ENCODE measurements at regions of chr1 and their contacts with region 1.

Region 1: GRCh38 chr1:207963427-207964194 is 52.7 kb upstream of the CD34 start:
- DNase-seq: peak; percentile 86
- ATAC-seq: peak; percentile 84
- H3K4me3 Mint-ChIP-seq: peak overlapping the region; percentile 74
- H3K27ac Mint-ChIP-seq: peak overlapping the region; percentile 81
- H3K4me1 Mint-ChIP-seq: peaks cover 8% of the 10 kb centered on the region
- H3K27me3 Mint-ChIP-seq: peaks cover 39% of the 10 kb centered on the region

Region 2: GRCh38 chr1:207762622-207763021 is 201.0 kb before region 1 on chr1:
- CTCF ChIA-PET with region 1: no interaction called
- DNase-seq: no peak
- ATAC-seq: no peak
- H3K4me3 Mint-ChIP-seq: no peak overlapping the region
- H3K27ac Mint-ChIP-seq: no peak overlapping the region
- H3K4me1 Mint-ChIP-seq: peaks cover 6% of the 10 kb centered on the region
- H3K27me3 Mint-ChIP-seq: no peaks in the 10 kb centered on the region

Region 3: DNA sequence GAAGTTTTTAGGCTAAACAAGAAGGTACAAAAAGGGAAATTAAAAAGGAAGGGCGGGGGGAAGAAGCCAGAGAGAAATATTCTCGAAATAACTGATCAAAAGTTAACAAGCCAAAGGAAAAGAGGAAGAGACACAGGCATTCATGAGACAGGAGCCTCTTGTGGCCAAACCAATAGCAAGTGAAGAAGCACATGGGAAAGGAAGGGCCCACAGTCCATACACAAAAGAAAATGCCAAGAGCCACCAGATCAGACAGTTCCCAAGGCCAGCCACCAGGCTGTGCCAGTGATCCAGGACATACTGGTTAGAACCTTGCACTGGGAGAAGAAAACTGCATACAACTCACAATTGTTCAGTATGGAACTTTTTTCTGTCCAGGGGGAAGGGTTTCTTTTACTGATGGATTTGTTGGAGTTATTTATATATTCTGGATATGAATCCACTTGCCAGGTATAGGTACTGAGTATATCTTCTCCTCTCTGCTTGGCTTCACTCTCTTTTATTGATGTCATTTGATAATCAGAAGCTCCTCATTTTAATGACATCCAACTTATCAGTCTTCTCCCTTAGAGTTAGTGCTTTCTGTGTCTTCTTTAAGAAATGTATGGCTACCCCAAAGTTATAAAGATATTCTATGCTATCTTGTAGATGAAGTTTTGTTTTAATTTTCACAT is 135.0 kb before region 1 on chr1:
- CTCF ChIA-PET with region 1: interaction called, 30 read pairs
- DNase-seq: peak; percentile 74
- ATAC-seq: peak; percentile 20
- H3K4me3 Mint-ChIP-seq: no peak overlapping the region
- H3K27ac Mint-ChIP-seq: peak overlapping the region; percentile 65
- H3K4me1 Mint-ChIP-seq: peaks cover 95% of the 10 kb centered on the region
- H3K27me3 Mint-ChIP-seq: no peaks in the 10 kb centered on the region

Region 4: DNA sequence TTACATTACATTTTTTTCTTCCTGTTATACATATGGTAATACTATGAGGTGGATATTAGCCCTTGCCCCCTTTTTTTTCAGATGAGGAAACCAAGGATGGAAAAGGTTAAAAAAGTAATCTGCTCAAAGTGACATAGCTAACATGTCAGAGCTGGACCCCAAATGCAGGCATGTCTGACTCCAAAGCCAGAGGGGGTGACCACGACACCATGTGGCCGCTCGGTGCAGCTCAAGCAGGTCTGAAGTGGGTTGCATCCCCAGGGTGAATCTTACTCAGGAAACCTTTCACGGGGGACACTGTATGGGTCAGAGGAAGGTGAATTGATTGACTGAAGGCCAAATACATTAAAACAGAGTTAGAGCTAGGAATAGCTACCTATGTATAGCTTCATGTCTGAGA is 87.5 kb before region 1 on chr1:
- CTCF ChIA-PET with region 1: interaction called, 37 read pairs
- DNase-seq: peak; percentile 55
- ATAC-seq: peak; percentile 34
- H3K4me3 Mint-ChIP-seq: no peak overlapping the region
- H3K27ac Mint-ChIP-seq: no peak overlapping the region
- H3K4me1 Mint-ChIP-seq: peaks cover 58% of the 10 kb centered on the region
- H3K27me3 Mint-ChIP-seq: no peaks in the 10 kb centered on the region

Region 5: DNA sequence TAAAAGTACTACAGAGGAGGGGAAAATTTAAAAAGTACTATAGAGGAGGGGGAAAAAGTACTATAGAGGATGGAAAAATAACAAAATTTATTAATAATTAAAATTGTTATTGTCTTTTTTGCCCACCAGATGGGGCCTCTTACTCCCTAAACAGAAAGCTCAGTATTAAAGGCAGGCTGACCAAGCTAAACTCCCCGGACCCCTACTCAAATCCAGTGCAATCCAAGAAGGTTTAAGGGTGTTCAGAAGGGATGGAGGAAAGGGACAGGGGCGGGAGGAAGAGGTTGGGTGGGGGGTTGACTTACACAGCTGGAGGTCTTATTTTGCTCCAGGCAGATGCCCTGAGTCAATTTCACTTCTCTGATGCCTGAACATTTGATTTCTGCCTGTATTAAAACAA is 66.4 kb before region 1 on chr1:
- CTCF ChIA-PET with region 1: interaction called, 47 read pairs
- DNase-seq: no peak
- ATAC-seq: no peak
- H3K4me3 Mint-ChIP-seq: no peak overlapping the region
- H3K27ac Mint-ChIP-seq: no peak overlapping the region
- H3K4me1 Mint-ChIP-seq: peaks cover 15% of the 10 kb centered on the region
- H3K27me3 Mint-ChIP-seq: peaks cover 5% of the 10 kb centered on the region

Region 6: GRCh38 chr1:207946756-207947155 is 16.9 kb before region 1 on chr1:
- CTCF ChIA-PET with region 1: interaction called, 32 read pairs
- DNase-seq: no peak
- ATAC-seq: no peak
- H3K4me3 Mint-ChIP-seq: no peak overlapping the region
- H3K27ac Mint-ChIP-seq: no peak overlapping the region
- H3K4me1 Mint-ChIP-seq: no peaks in the 10 kb centered on the region
- H3K27me3 Mint-ChIP-seq: peaks cover 26% of the 10 kb centered on the region

Region 7: GRCh38 chr1:208047476-208047934 is 83.9 kb after region 1 on chr1:
- CTCF ChIA-PET with region 1: no interaction called
- DNase-seq: no peak
- ATAC-seq: no peak
- H3K4me3 Mint-ChIP-seq: no peak overlapping the region
- H3K27ac Mint-ChIP-seq: no peak overlapping the region
- H3K4me1 Mint-ChIP-seq: peaks cover 11% of the 10 kb centered on the region
- H3K27me3 Mint-ChIP-seq: peaks cover 3% of the 10 kb centered on the region

Region 8: DNA sequence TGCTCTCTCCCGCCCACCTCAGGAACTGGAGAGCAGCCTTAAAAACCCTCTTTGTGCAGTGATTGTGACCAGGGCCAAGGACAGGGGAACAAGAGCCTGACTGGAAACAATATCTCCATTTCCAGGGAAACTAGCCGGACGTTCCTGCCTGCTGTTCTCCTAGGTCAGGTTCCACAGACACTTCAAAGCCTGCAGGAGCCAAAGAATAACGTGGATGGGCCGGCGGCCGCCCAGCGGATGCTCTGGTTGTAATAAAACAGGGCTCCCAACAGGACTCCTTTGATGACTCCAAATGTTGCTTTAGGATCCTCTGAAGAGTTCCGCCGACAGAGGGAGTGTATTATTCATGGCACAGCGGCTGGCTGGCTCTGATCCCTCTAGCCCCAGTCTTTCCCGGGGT is 118.4 kb after region 1 on chr1:
- CTCF ChIA-PET with region 1: no interaction called
- DNase-seq: no peak
- ATAC-seq: no peak
- H3K4me3 Mint-ChIP-seq: no peak overlapping the region
- H3K27ac Mint-ChIP-seq: no peak overlapping the region
- H3K4me1 Mint-ChIP-seq: peaks cover 13% of the 10 kb centered on the region
- H3K27me3 Mint-ChIP-seq: peaks cover 6% of the 10 kb centered on the region

Region 9: DNA sequence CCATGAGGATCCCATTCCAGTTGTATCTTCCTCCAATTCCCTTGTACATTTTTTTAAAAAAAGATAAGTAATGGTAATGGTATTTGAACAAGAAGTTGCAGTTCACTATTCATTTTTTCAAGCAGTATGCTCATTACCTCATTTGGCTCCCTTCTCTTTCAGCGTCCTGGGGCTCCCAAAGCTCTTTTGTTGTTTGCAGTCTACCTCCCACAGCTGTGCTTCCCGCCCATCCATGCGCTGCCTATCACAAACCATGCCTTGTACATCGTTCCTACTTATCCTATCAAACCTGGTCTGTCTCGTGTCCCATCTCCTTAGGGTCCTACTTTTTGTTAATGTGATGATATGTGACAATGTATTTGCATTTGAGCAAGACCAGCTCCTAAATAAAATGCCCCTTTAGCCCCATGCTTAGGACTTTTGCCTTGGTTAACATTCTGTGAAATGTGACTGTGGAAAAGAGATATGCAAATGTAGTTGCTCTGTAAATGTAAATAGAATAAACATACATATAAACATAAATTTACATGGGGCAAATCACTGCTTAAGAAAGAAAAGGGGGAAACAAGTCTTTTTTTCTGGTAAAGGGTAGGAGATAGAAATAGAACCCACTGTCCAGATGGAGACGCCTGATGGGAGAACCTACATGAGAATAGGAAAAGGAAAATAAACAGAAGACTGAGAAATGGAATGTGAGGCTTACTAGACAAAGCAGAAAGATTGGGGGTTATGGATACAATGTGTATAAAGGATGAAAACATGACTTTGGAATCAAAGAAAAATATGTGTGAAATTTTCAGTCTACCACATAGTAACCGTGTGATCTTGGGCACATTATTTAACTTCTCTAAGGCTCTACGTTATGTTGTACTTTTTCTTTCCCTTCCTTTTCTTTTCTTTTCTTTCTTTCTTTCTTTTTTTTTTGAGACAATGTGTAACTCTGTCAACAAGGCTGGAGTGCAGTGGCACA is 340.4 kb after region 1 on chr1:
- CTCF ChIA-PET with region 1: no interaction called
- DNase-seq: no peak
- ATAC-seq: no peak
- H3K4me3 Mint-ChIP-seq: no peak overlapping the region
- H3K27ac Mint-ChIP-seq: no peak overlapping the region
- H3K4me1 Mint-ChIP-seq: no peaks in the 10 kb centered on the region
- H3K27me3 Mint-ChIP-seq: peaks cover 18% of the 10 kb centered on the region

Measured in activated CD8-positive, alpha-beta memory T cell treated with anti-CD3 and anti-CD28 coated beads, Interleukin-2, amount 10 ng/mL, durations not matched to agents 7 days and 5 days (primary cell).